ENCODE measurements at regions of chr6 and their contacts with region 1.

Region 1: DNA sequence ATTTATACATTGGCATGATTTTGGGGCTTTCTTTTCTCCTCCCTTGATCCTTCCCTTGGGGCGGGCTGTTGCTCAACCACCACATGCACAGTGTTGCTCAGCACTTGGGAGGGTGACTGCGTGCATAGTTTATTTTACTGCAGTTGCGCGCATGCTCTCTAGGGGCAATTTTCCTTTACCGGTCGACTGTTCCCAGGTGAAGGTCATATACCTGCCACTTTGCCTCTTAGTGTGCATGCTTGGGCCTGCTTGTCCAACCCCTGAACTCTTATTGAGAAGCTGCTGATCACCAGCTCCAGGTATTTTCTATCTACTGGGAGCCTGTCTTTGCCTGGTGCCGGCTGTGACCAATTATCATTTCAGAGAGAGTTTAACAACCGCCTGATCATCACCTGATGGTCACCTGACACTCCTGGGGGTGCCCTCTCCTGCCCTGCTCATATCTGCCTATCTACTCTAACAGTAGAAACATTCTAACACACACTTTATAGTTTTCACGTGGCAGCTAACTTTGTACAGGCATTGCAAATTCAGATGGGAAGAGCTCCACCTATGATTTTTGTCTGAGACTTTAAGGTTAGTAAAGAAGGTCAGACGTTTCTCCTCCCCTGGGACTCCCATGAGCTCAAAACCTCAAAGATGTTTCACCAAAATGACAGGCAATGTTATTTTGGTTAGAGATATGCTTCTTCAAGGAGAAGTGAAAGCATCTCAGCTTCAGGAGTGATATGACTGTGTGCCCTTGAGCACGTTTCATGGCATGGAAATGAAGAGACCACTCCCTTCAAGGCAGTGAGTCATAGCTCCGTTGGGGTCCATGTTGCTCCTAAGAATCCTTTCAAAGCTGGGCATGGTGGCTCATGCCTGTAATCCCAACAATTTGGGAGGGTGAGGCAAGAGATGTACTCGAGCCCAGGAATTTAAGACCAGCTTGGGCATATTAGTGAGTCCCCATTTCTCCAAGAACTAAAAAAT is 227.5 kb upstream of the MYLIP start:
- DNase-seq: peak; percentile 99
- ATAC-seq: peak; percentile 90
- H3K4me3 ChIP-seq: no peak overlapping the region; the same call in 1 of the 2 replicates
- H3K27ac ChIP-seq: peak overlapping the region; percentile 96
- H3K4me1 ChIP-seq: peaks cover 60% of the 10 kb centered on the region
- H3K27me3 ChIP-seq: no peaks in the 10 kb centered on the region
- CTCF ChIP-seq: peak in 1 of 3 experiments; percentile 17; a peak in 1 of 6 replicates
- EP300 ChIP-seq: peak; percentile 97 to 99
- POLR2A ChIP-seq: no peak
- RAD21 ChIP-seq: peak; percentile 35; the same call in 1 of the 2 replicates

Region 2: GRCh38 chr6:15378866-15379265 is 522.6 kb before region 1 on chr6:
- CTCF ChIA-PET with region 1: no interaction called
- POLR2A ChIA-PET with region 1: no interaction called
- RAD21 ChIA-PET with region 1: no interaction called
- SMC1A ChIA-PET with region 1: no interaction called
- in situ Hi-C with region 1: no loop called
- intact Hi-C with region 1: no loop called
- DNase-seq: no peak
- ATAC-seq: no peak
- H3K4me3 ChIP-seq: no peak overlapping the region
- H3K27ac ChIP-seq: no peak overlapping the region
- H3K4me1 ChIP-seq: peaks cover 8% of the 10 kb centered on the region; the same call in 1 of the 2 replicates
- H3K27me3 ChIP-seq: no peaks in the 10 kb centered on the region
- CTCF ChIP-seq: no peak
- EP300 ChIP-seq: no peak
- POLR2A ChIP-seq: no peak
- RAD21 ChIP-seq: no peak

Region 3: GRCh38 chr6:15735567-15736265 is 165.7 kb before region 1 on chr6:
- CTCF ChIA-PET with region 1: interaction called, 8 read pairs
- POLR2A ChIA-PET with region 1: interaction called, 5 read pairs
- RAD21 ChIA-PET with region 1: interaction called, 20 read pairs
- SMC1A ChIA-PET with region 1: interaction called, 23 read pairs
- in situ Hi-C with region 1: no loop called
- intact Hi-C with region 1: no loop called
- DNase-seq: no peak
- ATAC-seq: peak; percentile 74
- H3K4me3 ChIP-seq: no peak overlapping the region
- H3K27ac ChIP-seq: no peak overlapping the region
- H3K4me1 ChIP-seq: peaks cover 4% of the 10 kb centered on the region; the same call in 1 of the 2 replicates
- H3K27me3 ChIP-seq: no peaks in the 10 kb centered on the region
- CTCF ChIP-seq: no peak
- EP300 ChIP-seq: peak; percentile 60 to 74; a peak in 3 of 4 replicates
- POLR2A ChIP-seq: no peak
- RAD21 ChIP-seq: no peak

Region 4: DNA sequence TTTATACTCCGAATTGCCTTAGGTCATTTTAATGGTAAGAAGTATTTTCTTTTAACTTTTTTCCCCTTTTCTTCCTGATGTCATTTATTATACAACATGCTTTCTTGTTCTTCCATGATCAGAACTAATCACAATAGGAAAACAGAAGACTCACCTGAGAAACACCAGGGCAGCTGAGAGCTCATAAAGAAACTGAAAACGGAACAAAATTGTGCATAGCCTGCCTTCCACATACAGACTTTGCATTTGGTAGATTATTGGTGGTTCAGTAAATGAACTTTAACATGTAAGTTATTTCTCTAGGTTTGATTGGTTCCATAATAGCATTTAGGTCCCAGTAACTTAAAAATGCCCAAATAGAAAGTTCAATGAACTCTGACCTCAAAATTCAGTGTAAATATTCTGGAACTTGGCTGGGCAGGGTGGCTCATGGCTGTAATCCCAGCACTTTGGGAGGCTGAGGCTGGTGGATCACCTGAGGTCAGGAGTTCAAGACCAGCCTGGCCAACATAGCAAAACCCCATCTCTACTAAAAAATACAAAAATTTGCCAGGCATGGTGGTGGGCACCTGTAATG is 77.5 kb before region 1 on chr6:
- CTCF ChIA-PET with region 1: no interaction called
- POLR2A ChIA-PET with region 1: no interaction called
- RAD21 ChIA-PET with region 1: interaction called, 3 read pairs
- SMC1A ChIA-PET with region 1: interaction called, 11 read pairs
- in situ Hi-C with region 1: no loop called
- intact Hi-C with region 1: no loop called
- DNase-seq: peak; percentile 40
- ATAC-seq: peak; percentile 90
- H3K4me3 ChIP-seq: no peak overlapping the region
- H3K27ac ChIP-seq: no peak overlapping the region
- H3K4me1 ChIP-seq: peaks cover 9% of the 10 kb centered on the region
- H3K27me3 ChIP-seq: no peaks in the 10 kb centered on the region
- CTCF ChIP-seq: no peak
- EP300 ChIP-seq: peak in 1 of 2 experiments; percentile 33; a peak in 1 of 4 replicates
- POLR2A ChIP-seq: no peak
- RAD21 ChIP-seq: no peak

Region 5: DNA sequence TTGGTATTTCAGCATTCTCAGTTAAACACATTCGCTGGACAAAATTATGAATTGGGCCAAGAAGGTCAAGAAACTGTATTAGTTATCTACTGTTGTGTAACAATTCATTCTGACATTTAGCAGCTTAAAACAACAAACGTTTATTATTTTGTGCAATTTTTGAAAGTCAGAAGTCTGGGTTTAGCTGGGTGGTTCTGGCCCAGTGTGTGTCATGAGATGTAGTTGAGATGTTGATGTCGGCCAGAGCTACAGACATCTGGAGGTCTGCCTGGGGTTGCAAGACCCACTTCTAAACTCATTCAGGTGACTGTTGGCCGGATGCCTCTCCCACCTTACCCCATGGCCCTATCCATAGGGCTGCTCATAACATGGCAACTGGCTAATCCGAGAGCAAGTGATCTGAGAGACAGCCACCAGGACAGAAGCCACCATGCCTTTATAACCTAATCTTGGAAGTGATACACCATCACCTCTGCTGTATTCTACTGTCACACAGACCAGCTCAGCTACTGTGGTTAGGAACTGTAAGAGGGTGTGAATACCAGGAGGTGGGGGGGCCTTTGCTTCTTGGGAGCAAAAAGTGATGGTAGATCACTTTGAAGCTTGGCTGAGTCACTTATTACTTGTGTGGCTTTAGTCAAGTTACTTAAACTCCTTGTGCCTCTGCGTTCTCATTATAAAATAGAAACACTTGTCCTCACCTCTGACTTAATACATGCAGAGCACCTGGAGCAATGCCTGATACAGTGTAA is 10.5 kb after region 1 on chr6:
- CTCF ChIA-PET with region 1: interaction called, 17 read pairs
- POLR2A ChIA-PET with region 1: interaction called, 5 read pairs
- RAD21 ChIA-PET with region 1: interaction called, 16 read pairs
- SMC1A ChIA-PET with region 1: interaction called, 8 read pairs
- in situ Hi-C with region 1: no loop called
- intact Hi-C with region 1: no loop called
- DNase-seq: no peak
- ATAC-seq: no peak
- H3K4me3 ChIP-seq: no peak overlapping the region
- H3K27ac ChIP-seq: no peak overlapping the region
- H3K4me1 ChIP-seq: peaks cover 20% of the 10 kb centered on the region
- H3K27me3 ChIP-seq: no peaks in the 10 kb centered on the region
- CTCF ChIP-seq: no peak
- EP300 ChIP-seq: no peak
- POLR2A ChIP-seq: no peak
- RAD21 ChIP-seq: no peak

Region 6: GRCh38 chr6:15962449-15962764 is 61.0 kb after region 1 on chr6:
- CTCF ChIA-PET with region 1: interaction called, 7 read pairs
- POLR2A ChIA-PET with region 1: interaction called, 4 read pairs
- RAD21 ChIA-PET with region 1: interaction called, 60 read pairs
- SMC1A ChIA-PET with region 1: interaction called, 11 read pairs
- in situ Hi-C with region 1: no loop called
- intact Hi-C with region 1: loop called (anchors 2 kb)
- DNase-seq: no peak
- ATAC-seq: peak; percentile 78
- H3K4me3 ChIP-seq: no peak overlapping the region
- H3K27ac ChIP-seq: peak overlapping the region; percentile 45
- H3K4me1 ChIP-seq: peaks cover 26% of the 10 kb centered on the region; the same call in 1 of the 2 replicates
- H3K27me3 ChIP-seq: no peaks in the 10 kb centered on the region
- CTCF ChIP-seq: no peak
- EP300 ChIP-seq: peak; percentile 12 to 48; a peak in 2 of 4 replicates
- POLR2A ChIP-seq: no peak
- RAD21 ChIP-seq: no peak

Region 7: GRCh38 chr6:16128759-16129622 is 227.6 kb after region 1 on chr6 and contains the start of gene MYLIP:
- CTCF ChIA-PET with region 1: interaction called, 56 read pairs
- POLR2A ChIA-PET with region 1: interaction called, 53 read pairs
- RAD21 ChIA-PET with region 1: interaction called, 220 read pairs
- SMC1A ChIA-PET with region 1: interaction called, 184 read pairs
- in situ Hi-C with region 1: no loop called
- intact Hi-C with region 1: loop called (anchors 2 kb)
- DNase-seq: peak; percentile 74
- ATAC-seq: peak; percentile 87
- H3K4me3 ChIP-seq: peak within 1 kb of the TSS; percentile 86
- H3K27ac ChIP-seq: peak within 1 kb of the TSS; percentile 53
- H3K4me1 ChIP-seq: peaks cover 6% of the 10 kb centered on the region
- H3K27me3 ChIP-seq: no peaks in the 10 kb centered on the region
- CTCF ChIP-seq: peak; percentile 73 to 91 (median 79)
- EP300 ChIP-seq: peak in 1 of 2 experiments; percentile 12; a peak in 1 of 4 replicates
- POLR2A ChIP-seq: peak; percentile 100
- RAD21 ChIP-seq: peak; percentile 77
- polyA plus RNA-seq, gene MYLIP: 5.3 to 5.8 TPM

Measured in GM12878 (cell line).